Activated B cell treated with CpG ODN at 0.5 μM for 24 hours (primary cell): ENCODE measurements at regions of chr11 and their contacts with region 1.

Region 1: GRCh38 chr11:108887436-108888238 is 222.8 kb downstream of the DDX10 start:
- DNase-seq: no peak
- ATAC-seq: no peak
- H3K4me3 Mint-ChIP-seq: no peak overlapping the region
- H3K27ac Mint-ChIP-seq: no peak overlapping the region
- H3K4me1 Mint-ChIP-seq: peaks cover 1% of the 10 kb centered on the region
- H3K27me3 Mint-ChIP-seq: no peaks in the 10 kb centered on the region
- CTCF ChIP-seq: no peak

Region 2: GRCh38 chr11:108897916-108898315 is 10.3 kb after region 1 on chr11:
- CTCF ChIA-PET with region 1: no interaction called
- POLR2A ChIA-PET with region 1: interaction called, 12 read pairs
- intact Hi-C with region 1: no loop called
- DNase-seq: no peak
- ATAC-seq: no peak
- H3K4me3 Mint-ChIP-seq: no peak overlapping the region
- H3K27ac Mint-ChIP-seq: no peak overlapping the region
- H3K4me1 Mint-ChIP-seq: peaks cover 13% of the 10 kb centered on the region
- H3K27me3 Mint-ChIP-seq: no peaks in the 10 kb centered on the region
- CTCF ChIP-seq: no peak